ENCODE measurements at regions of chr6 and their contacts with region 1.

Region 1: GRCh38 chr6:6676910-6677441 is 88.5 kb downstream of the LY86 start:
- DNase-seq: peak; percentile 65
- ATAC-seq: peak; percentile 94
- H3K4me3 Mint-ChIP-seq: no peak overlapping the region
- H3K27ac Mint-ChIP-seq: no peak overlapping the region
- H3K4me1 Mint-ChIP-seq: peaks cover 8% of the 10 kb centered on the region
- H3K27me3 Mint-ChIP-seq: peaks cover 6% of the 10 kb centered on the region
- CTCF ChIP-seq: peak; percentile 95

Region 2: DNA sequence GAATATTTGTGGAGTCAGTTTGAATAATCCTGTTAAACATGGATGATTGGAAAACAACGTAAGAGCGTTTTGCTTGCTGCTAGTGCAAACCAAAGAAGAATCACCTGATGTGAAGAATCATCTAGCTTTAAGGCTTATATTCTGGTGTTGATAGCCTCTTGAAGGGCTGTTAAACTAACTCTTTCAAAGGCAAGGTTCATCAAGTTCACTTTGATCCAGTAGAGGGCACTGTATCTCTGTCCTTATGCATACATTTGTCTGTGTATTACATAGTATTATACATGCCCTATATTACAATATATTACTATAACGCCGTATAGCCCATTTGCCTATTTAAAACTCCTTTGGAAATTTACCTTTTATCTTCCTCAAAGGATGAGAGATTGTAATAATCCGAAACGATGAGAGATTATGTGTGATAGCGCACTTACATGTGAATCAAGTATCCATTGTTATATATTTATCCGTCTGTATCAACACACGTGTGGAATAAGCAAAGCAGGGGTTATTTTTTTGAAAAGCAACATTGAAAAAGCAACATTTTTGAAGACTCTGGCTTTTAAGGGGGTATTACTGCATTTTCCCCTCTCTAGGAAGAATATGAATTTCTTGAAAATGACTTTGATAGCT is 619.4 kb before region 1 on chr6:
- CTCF ChIA-PET with region 1: no interaction called
- POLR2A ChIA-PET with region 1: no interaction called
- intact Hi-C with region 1: loop called (anchors 5 kb)
- DNase-seq: no peak
- ATAC-seq: peak; percentile 66
- H3K4me3 Mint-ChIP-seq: no peak overlapping the region
- H3K27ac Mint-ChIP-seq: no peak overlapping the region
- H3K4me1 Mint-ChIP-seq: no peaks in the 10 kb centered on the region
- H3K27me3 Mint-ChIP-seq: peaks cover 37% of the 10 kb centered on the region
- CTCF ChIP-seq: peak; percentile 42

Region 3: DNA sequence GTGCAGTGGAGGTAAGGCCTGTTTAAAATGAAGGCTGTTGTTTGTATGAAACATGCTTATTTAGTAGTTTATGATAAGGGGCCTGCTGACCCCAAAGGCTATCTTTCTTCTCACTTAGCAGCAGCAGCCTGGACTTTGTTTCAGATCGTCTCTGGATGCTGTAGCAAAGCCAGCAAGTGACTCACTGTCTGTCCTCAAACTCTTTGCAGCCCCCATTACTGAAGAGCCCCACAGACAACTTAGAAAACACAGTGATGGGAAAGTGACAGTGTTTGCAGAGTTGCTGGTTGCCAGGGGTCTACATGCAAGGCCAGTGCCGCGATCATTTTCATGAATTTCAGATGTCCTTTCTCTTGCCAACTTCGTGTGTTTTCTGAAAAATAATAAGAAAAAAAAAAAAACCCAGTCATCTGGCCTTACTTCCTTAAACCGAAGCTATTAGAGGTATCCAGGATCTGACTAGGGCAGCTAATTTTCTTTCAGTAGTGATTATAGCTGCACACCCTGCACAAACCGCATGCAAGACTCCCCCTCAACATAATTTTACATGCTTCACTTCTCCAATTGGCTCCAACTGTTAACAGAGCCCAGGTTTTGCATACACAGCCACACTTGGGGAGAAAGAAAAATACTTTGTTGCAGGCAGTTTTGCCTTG is 344.9 kb before region 1 on chr6:
- CTCF ChIA-PET with region 1: no interaction called
- POLR2A ChIA-PET with region 1: no interaction called
- intact Hi-C with region 1: no loop called
- DNase-seq: no peak
- ATAC-seq: peak; percentile 72
- H3K4me3 Mint-ChIP-seq: peak overlapping the region; percentile 81
- H3K27ac Mint-ChIP-seq: peak overlapping the region; percentile 100
- H3K4me1 Mint-ChIP-seq: peaks cover 48% of the 10 kb centered on the region
- H3K27me3 Mint-ChIP-seq: no peaks in the 10 kb centered on the region
- CTCF ChIP-seq: no peak

Region 4: DNA sequence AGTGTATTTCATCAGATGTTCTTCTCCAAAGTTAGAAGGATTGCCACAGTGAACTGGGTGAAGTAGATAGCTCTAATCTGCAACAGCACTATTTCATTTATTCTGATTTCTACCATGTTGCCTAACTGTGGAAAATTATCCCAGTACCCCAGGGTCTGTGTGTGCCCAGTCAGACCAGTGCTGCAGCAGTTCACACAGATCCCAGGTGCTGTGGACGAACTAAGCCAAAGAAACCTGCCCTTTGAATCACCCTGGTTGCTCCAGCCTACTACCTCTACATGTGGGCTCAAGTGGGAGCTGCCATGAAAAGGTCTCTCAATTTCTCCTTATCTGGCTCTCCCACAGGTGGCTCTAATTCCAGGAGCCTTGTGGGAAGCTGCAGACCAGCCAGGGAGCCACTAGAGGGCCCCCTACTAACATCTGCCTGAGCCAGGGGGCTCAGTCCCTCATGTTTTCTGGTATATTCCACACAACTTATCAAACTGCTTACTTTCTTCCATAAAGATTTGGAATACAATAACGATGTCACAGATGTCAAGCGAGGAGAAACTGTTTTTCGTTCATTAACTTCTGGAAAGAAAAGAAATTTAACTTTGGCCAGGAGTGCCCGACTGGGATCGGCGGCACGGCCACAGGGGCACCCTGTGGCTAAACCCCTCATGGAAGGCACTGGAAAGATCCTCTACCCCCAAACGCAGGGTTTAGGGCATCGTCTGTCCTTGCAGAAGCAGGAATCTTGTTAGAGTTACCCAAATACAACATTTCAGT is 120.1 kb before region 1 on chr6:
- CTCF ChIA-PET with region 1: interaction called, 8 read pairs
- POLR2A ChIA-PET with region 1: no interaction called
- intact Hi-C with region 1: loop called (anchors 1 kb)
- DNase-seq: peak; percentile 28
- ATAC-seq: peak; percentile 81
- H3K4me3 Mint-ChIP-seq: no peak overlapping the region
- H3K27ac Mint-ChIP-seq: no peak overlapping the region
- H3K4me1 Mint-ChIP-seq: peaks cover 3% of the 10 kb centered on the region
- H3K27me3 Mint-ChIP-seq: no peaks in the 10 kb centered on the region
- CTCF ChIP-seq: peak; percentile 83

Region 5: GRCh38 chr6:6724539-6725467 is 47.8 kb after region 1 on chr6:
- CTCF ChIA-PET with region 1: interaction called, 13 read pairs
- POLR2A ChIA-PET with region 1: no interaction called
- intact Hi-C with region 1: loop called (anchors 2 kb)
- DNase-seq: peak; percentile 40
- ATAC-seq: peak; percentile 84
- H3K4me3 Mint-ChIP-seq: peak overlapping the region; percentile 65
- H3K27ac Mint-ChIP-seq: no peak overlapping the region
- H3K4me1 Mint-ChIP-seq: peaks cover 8% of the 10 kb centered on the region
- H3K27me3 Mint-ChIP-seq: peaks cover 23% of the 10 kb centered on the region
- CTCF ChIP-seq: no peak

Region 6: GRCh38 chr6:6885521-6886170 is 208.7 kb after region 1 on chr6:
- CTCF ChIA-PET with region 1: no interaction called
- POLR2A ChIA-PET with region 1: no interaction called
- intact Hi-C with region 1: no loop called
- DNase-seq: no peak
- ATAC-seq: no peak
- H3K4me3 Mint-ChIP-seq: no peak overlapping the region
- H3K27ac Mint-ChIP-seq: no peak overlapping the region
- H3K4me1 Mint-ChIP-seq: no peaks in the 10 kb centered on the region
- H3K27me3 Mint-ChIP-seq: no peaks in the 10 kb centered on the region
- CTCF ChIP-seq: no peak

Region 7: GRCh38 chr6:8219352-8219943 is 1542.5 kb after region 1 on chr6:
- CTCF ChIA-PET with region 1: interaction called, 3 read pairs
- POLR2A ChIA-PET with region 1: no interaction called
- intact Hi-C with region 1: loop called (anchors 2 kb)
- DNase-seq: no peak
- ATAC-seq: peak; percentile 57
- H3K4me3 Mint-ChIP-seq: no peak overlapping the region
- H3K27ac Mint-ChIP-seq: no peak overlapping the region
- H3K4me1 Mint-ChIP-seq: no peaks in the 10 kb centered on the region
- H3K27me3 Mint-ChIP-seq: peaks cover 5% of the 10 kb centered on the region
- CTCF ChIP-seq: no peak